ENCODE measurements at regions of chr9 and their contacts with region 1.

Region 1: DNA sequence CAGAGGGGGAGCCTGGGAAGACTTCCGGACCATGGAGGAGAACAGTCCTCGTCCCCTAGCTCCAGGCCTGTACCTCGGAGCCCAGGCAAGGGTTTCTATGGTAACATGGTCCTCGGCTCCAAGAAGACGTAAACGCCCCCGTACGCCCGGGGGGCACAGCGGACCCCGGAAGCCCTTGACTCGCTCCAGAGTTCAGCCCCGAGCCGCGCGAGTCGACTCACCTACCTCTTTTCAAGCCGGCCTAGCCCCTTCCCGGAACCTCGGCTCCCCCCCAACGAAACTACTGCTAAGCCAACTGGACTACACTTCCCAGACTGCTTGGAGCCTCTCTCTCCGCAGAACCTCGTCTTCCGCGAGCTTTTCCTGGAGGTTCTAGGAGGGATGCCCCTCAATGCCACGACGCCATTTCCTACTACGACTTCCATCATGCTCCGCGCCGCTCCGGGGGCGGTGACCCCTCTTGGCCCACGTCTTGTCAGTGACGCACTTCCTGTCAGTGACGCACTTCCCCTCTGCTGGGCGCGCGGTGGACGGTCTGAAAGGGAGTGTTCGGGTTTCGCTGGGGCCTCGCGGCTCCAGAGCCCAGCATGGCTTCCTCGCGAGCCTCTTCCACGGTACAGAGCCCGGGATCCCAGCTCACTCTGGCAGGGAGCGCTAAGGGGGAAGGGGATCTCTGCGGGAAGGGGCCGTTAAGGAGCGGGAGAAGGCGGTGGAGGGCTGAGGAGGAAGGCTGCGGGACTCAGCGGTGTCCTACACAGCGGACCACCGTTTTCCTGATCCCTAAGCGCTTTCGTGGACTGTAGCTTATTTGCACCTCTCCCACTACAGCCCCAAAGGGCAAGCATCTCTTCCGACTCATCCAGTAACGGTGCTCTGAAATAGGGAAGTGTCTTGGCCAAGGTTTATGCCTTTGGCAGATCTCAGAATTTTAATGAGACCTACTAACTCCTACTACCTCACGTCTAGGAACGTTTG is at the starts of genes CDC26 and PRPF4:
- DNase-seq: peak; percentile 99
- H3K4me3 ChIP-seq: peak within 1 kb of the TSS; percentile 75 to 89 (median 82)
- H3K27ac ChIP-seq: peak within 1 kb of the TSS; percentile 94 to 96 (median 94)
- H3K4me1 ChIP-seq: peaks cover 0 to 36% (median 20%) of the 10 kb centered on the region in 4 donors
- H3K27me3 ChIP-seq: no peaks in the 10 kb centered on the region
- CTCF ChIP-seq: no peak
- EP300 ChIP-seq: peak in 1 of 4 donors; percentile 91
- POLR2A ChIP-seq: peak; percentile 97 to 98
- total RNA-seq, gene CDC26: 57.1 to 71.7 (median 66.2) TPM
- total RNA-seq, gene PRPF4: 12.7 to 21.4 (median 14.1) TPM

Region 2: GRCh38 chr9:113221003-113221799 is 54.2 kb before region 1 on chr9 and contains the starts of genes FKBP15 and SLC31A1:
- intact Hi-C with region 1: loop called (anchors 1 kb)
- DNase-seq: peak; percentile 99
- H3K4me3 ChIP-seq: peak within 1 kb of the TSS; percentile 61 to 76 (median 66)
- H3K27ac ChIP-seq: peak within 1 kb of the TSS; percentile 81 to 89 (median 87)
- H3K4me1 ChIP-seq: peaks cover 0 to 46% (median 28%) of the 10 kb centered on the region in 4 donors
- H3K27me3 ChIP-seq: no peaks in the 10 kb centered on the region
- CTCF ChIP-seq: no peak
- EP300 ChIP-seq: peak in 1 of 4 donors; percentile 53
- POLR2A ChIP-seq: peak; percentile 42 to 68
- total RNA-seq, gene FKBP15: 18.8 to 22.5 (median 20.9) TPM
- total RNA-seq, gene SLC31A1: 7.1 to 9.6 (median 8.6) TPM

Region 3: GRCh38 chr9:113317777-113318176 is 42.3 kb after region 1 on chr9:
- intact Hi-C with region 1: no loop called
- DNase-seq: no peak
- H3K4me3 ChIP-seq: no peak overlapping the region
- H3K27ac ChIP-seq: no peak overlapping the region
- H3K4me1 ChIP-seq: no peaks in the 10 kb centered on the region
- H3K27me3 ChIP-seq: no peaks in the 10 kb centered on the region
- CTCF ChIP-seq: no peak
- EP300 ChIP-seq: no peak
- POLR2A ChIP-seq: no peak

Region 4: GRCh38 chr9:113340017-113340699 is 64.7 kb after region 1 on chr9 and contains the start of gene WDR31:
- intact Hi-C with region 1: loop called (anchors 1 kb)
- DNase-seq: peak; percentile 93
- H3K4me3 ChIP-seq: peak within 1 kb of the TSS; percentile 66 to 84 (median 70)
- H3K27ac ChIP-seq: peak within 1 kb of the TSS; percentile 80 to 88 (median 88)
- H3K4me1 ChIP-seq: peaks cover 0 to 38% (median 28%) of the 10 kb centered on the region in 4 donors
- H3K27me3 ChIP-seq: no peaks in the 10 kb centered on the region
- CTCF ChIP-seq: no peak
- EP300 ChIP-seq: no peak
- POLR2A ChIP-seq: peak in 1 of 2 donors; percentile 45
- total RNA-seq, gene WDR31: 1.8 to 3.9 (median 2.6) TPM

Region 5: GRCh38 chr9:113410207-113410864 is 134.9 kb after region 1 on chr9 and contains the starts of genes C9orf43 and POLE3:
- intact Hi-C with region 1: loop called (anchors 1 kb)
- DNase-seq: peak; percentile 97
- H3K4me3 ChIP-seq: peak within 1 kb of the TSS; percentile 57 to 84 (median 72)
- H3K27ac ChIP-seq: peak within 1 kb of the TSS; percentile 93 to 98 (median 94)
- H3K4me1 ChIP-seq: peaks cover 0 to 24% (median 20%) of the 10 kb centered on the region in 4 donors
- H3K27me3 ChIP-seq: no peaks in the 10 kb centered on the region
- CTCF ChIP-seq: no peak
- EP300 ChIP-seq: peak in 2 of 4 donors; percentile 7 to 33
- POLR2A ChIP-seq: peak; percentile 68 to 74
- total RNA-seq, gene C9orf43: 0.36 to 0.68 (median 0.55) TPM in 3 of 4 donors, not detected in the other
- total RNA-seq, gene POLE3: 24.9 to 45.6 (median 39.1) TPM

Region 6: GRCh38 chr9:113591001-113591898 is 315.8 kb after region 1 on chr9:
- intact Hi-C with region 1: loop called (anchors 5 kb)
- DNase-seq: peak; percentile 90
- H3K4me3 ChIP-seq: no peak overlapping the region
- H3K27ac ChIP-seq: peak overlapping the region in 3 of 4 donors; percentile 36 to 91 (median 51)
- H3K4me1 ChIP-seq: peaks cover 0 to 51% (median 42%) of the 10 kb centered on the region in 4 donors
- H3K27me3 ChIP-seq: no peaks in the 10 kb centered on the region
- CTCF ChIP-seq: peak; percentile 78 to 91 (median 88)
- EP300 ChIP-seq: no peak
- POLR2A ChIP-seq: no peak

Region 7: GRCh38 chr9:113657703-113658544 is 382.5 kb after region 1 on chr9:
- intact Hi-C with region 1: loop called (anchors 2 kb)
- DNase-seq: peak; percentile 91
- H3K4me3 ChIP-seq: no peak overlapping the region
- H3K27ac ChIP-seq: no peak overlapping the region
- H3K4me1 ChIP-seq: peaks cover 0 to 19% (median 12%) of the 10 kb centered on the region in 4 donors
- H3K27me3 ChIP-seq: peaks cover 0 to 7% (median 0%) of the 10 kb centered on the region in 3 donors
- CTCF ChIP-seq: peak; percentile 92 to 97 (median 95)
- EP300 ChIP-seq: no peak
- POLR2A ChIP-seq: no peak

Measured in sigmoid colon (tissue), 7 donors.